Cardiac septum (tissue), 1 donor: ENCODE measurements at regions of chr3 and their contacts with region 1.

Region 1: GRCh38 chr3:48918388-48919214 is at the start of gene ARIH2:
- DNase-seq: peak; percentile 96
- total RNA-seq, gene ARIH2: 121 TPM

Region 2: DNA sequence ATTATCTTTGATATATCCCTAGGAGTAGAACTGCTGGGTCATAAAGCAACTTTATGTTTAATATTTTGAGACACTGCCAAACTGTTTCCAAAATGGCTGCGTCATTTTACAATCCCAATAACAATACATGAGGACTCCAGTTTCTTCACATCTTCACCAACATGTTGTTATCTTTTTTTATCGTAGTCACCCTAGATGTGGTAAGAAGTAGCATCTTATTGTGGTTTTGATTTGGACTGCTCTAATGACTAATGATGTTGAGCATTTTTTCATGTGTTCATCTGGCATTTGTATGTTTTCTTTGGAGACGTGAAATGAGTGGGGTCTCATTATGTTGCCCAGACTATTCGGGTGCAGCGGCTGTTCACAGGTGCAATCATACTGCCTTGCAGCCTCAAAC is 986.2 kb before region 1 on chr3:
- intact Hi-C with region 1: no loop called
- DNase-seq: no peak

Region 3: GRCh38 chr3:48739955-48740823 is 178.4 kb before region 1 on chr3:
- intact Hi-C with region 1: loop called (anchors 5 kb)
- DNase-seq: peak; percentile 92

Region 4: GRCh38 chr3:48784426-48785120 is 134.0 kb before region 1 on chr3:
- intact Hi-C with region 1: no loop called
- DNase-seq: no peak

Region 5: GRCh38 chr3:48898383-48899234 is 20.0 kb before region 1 on chr3 and contains the start of gene SLC25A20:
- intact Hi-C with region 1: loop called (anchors 2 kb)
- DNase-seq: peak; percentile 97
- total RNA-seq, gene SLC25A20: 36.7 TPM

Region 6: GRCh38 chr3:49007068-49007770 is 88.6 kb after region 1 on chr3 and contains the start of gene WDR6:
- intact Hi-C with region 1: loop called (anchors 5 kb)
- DNase-seq: peak; percentile 98
- total RNA-seq, gene WDR6: 96.6 TPM

Region 7: GRCh38 chr3:49171119-49171774 is 252.6 kb after region 1 on chr3 and contains the start of gene KLHDC8B:
- intact Hi-C with region 1: no loop called
- DNase-seq: peak; percentile 94
- total RNA-seq, gene KLHDC8B: 132 TPM